Left colon (tissue), 2 donors: ENCODE measurements at regions of chr2 and their contacts with region 1.

Region 1: GRCh38 chr2:97806738-97807618 is 93.6 kb downstream of the ZAP70 start:
- DNase-seq: peak; percentile 74 to 88
- ATAC-seq: peak; percentile 97

Region 2: DNA sequence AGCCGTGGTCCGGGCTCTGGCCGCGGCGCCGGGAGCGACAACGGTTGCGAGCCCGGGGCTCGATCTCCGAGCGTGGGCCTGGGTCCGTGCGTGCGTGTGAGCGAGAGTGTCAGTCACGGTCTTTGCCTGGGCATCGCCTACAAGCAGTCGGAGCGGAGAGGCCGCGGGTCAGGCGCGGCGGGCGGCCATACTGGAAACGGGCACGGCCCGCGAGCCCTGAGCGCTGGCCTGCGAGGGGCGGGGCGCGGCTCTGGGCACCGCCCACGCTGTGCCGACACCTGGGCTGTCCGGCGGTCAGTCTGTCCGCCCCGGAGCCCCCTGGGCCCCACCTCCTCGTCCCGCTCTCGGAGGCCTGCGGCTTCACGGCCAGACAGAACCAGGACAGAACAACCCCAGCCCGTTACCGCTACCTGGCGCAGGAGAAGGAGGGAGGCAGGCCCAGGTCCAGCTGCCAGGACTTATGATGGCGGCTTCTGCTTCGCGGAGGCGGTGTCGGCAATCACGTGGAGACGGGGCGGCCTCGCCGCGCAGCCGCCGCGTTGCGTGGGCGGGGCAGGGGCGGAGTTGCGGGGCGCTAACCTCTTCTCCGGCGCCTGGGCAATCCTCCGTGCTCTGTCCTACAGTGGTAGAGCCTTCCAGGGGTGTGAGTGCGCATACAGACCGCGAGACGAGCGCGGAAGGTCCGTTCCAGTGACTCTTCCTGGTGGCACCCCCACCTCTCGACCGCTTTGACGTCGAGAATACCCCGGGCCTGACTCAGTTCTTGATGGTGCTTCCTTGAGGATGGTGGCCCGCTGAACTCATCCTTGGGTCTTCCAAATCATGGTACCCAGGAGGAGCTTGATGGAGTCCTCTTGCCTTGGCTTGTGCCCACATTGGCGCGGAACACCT is 189.0 kb after region 1 on chr2 and contains the start of gene TMEM131:
- intact Hi-C with region 1: loop called in 1 of 2 experiments (anchors 10 kb)
- DNase-seq: peak; percentile 94 to 96
- ATAC-seq: peak; percentile 90
- total RNA-seq, gene TMEM131: 80.6 to 89.5 TPM

Region 3: DNA sequence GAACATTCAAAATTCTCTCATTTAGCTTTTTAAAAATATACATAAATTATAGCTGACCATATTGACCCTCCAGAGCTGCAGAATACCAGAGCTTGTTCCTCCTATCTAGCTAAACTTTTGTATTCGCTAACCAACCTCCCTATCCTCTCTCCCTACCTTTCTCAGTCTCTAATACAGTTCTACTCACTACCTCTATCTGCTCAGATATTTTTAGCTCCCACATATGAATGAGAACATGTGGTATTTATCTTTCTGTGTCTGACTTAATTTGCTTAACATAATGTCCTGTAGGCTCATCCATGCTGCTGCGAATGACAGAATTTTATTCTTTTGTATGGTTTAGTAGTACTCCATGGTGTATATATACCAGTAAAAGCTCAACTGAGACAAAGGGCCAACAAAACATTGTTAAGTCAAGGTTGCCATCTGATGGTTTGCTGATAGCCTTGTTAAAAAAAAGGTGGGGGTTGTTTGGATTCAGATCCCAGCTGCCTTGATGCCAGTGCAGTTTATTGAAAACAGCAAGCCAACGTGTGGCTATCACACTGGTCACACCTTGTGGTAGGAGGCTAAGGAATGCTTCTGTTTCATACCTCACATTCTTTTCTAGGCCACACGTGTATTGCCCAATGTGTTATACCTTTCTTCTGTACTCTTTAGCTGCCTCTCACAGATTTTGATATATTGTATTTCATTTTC is 381.5 kb after region 1 on chr2:
- intact Hi-C with region 1: loop called in 1 of 2 experiments (anchors 5 kb)
- DNase-seq: no peak
- ATAC-seq: peak; percentile 64

Region 4: GRCh38 chr2:98269830-98270229 is 462.9 kb after region 1 on chr2:
- intact Hi-C with region 1: loop called in 1 of 2 experiments (anchors 10 kb)
- DNase-seq: no peak
- ATAC-seq: no peak

Region 5: DNA sequence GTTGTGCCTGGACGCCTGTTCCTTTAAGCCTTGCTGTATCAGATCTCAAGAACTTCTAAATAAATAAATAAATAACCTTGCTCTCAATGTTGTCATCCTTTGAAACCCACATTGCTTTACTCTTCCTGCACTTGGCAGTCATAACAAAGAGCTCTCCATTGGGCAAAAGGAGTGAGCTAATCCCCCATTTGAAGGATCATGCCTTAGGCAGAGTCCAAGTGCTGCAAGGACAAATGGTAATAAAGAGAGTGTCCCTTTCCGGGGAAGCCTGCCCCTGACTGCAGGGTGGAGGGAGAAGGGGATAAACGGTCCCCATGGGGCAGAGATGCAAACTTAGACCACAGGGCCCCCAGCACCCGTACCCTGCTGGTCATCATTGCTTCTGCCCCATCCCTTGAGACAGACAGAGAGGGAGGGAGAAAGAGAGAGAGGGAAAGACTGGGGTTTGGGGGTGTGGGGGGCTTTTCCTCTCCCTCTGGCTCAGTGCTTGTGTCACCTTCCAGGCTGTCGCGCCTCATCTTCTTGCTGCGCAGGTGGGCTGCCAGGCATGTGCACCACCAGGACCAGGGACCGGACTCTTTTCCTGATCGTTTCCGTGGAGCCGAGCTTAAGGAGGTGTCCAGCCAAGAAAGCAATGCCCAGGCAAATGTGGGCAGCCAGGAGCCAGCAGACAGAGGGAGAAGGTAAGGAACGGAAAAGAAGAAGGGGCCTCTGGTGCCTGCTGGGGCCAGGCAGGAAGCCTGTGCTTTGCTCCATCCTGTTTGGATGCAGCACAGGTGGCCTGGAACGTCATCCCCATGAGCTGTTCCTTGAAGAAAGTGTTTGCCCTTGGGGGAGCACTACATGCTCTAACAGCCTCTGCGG is 572.9 kb after region 1 on chr2:
- intact Hi-C with region 1: loop called in 1 of 2 experiments (anchors 5 kb)
- DNase-seq: no peak
- ATAC-seq: no peak